Heart right ventricle (tissue), 16 donors: ENCODE measurements at regions of chr1 and their contacts with region 1.

Region 1: DNA sequence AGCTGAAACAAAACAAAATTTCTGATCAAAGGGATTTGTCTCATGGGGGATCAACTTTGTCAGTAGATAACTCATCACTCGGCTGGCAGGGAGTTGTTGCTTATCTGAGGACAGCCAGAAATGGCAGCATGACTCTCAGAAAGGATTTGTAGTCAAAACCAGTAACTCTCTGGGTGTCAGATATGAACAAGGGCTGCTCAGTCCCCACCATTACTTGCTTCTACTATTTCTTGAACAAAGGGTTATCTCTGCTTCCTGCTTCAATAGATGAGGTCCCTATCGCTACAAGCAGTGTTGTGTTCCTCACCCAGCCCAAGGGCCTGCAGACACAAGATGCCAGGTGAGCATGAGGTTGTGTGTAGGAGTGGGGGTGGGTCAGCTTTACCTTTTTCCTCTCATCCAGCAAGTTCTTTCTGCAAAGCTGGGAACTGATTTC is 116.2 kb downstream of the PTBP2 start:
- DNase-seq: no peak
- ATAC-seq: no peak
- H3K4me3 ChIP-seq: no peak overlapping the region
- H3K27ac ChIP-seq: no peak overlapping the region
- H3K4me1 ChIP-seq: peaks cover 0 to 4% (median 0%) of the 10 kb centered on the region in 9 donors
- H3K27me3 ChIP-seq: no peaks in the 10 kb centered on the region
- CTCF ChIP-seq: no peak

Region 2: GRCh38 chr1:95660736-95661135 is 1177.1 kb before region 1 on chr1:
- intact Hi-C with region 1: loop called in 1 of 10 experiments (anchors 5 kb)
- DNase-seq: no peak
- ATAC-seq: no peak
- H3K4me3 ChIP-seq: no peak overlapping the region
- H3K27ac ChIP-seq: no peak overlapping the region
- H3K4me1 ChIP-seq: no peaks in the 10 kb centered on the region
- H3K27me3 ChIP-seq: peaks cover 0 to 5% (median 0%) of the 10 kb centered on the region in 7 donors
- CTCF ChIP-seq: no peak

Region 3: DNA sequence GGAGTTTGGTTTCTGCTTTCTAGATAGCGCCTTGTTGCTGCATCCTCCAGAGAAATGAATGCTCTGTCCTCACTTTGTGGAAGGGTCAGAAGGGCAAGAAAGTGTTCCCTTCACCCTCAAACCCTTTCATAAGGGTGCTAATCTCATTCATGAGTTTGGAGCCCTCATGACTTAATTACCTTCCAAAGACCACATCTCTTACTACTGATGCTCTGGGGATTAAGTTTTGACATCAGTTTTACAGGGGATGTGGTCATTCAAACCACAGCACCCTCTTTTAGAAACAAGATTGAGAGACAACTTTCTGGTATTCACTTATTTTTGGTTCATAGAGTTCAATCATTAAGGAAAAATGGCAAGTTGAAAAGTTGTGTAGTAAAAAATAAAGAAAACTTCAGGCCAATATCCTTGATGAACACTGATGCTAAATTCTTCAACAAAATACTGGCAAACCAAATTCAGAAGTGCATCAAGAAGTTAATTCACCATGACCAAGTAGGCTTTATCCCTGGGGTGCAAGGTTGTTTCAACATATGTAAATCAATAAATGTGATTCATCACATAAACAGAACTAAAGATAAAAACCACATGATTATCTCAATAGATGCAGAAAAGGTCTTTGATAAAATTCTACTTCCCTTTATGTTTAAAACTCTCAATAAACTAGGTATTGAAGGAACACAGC is 325.9 kb after region 1 on chr1:
- intact Hi-C with region 1: no loop called
- DNase-seq: no peak
- ATAC-seq: no peak
- H3K4me3 ChIP-seq: no peak overlapping the region
- H3K27ac ChIP-seq: no peak overlapping the region
- H3K4me1 ChIP-seq: peaks cover 0 to 11% (median 7%) of the 10 kb centered on the region in 9 donors
- H3K27me3 ChIP-seq: no peaks in the 10 kb centered on the region
- CTCF ChIP-seq: no peak